CD8-positive, alpha-beta memory T cell (primary cell): ENCODE measurements at regions of chr18 and their contacts with region 1.

Region 1: GRCh38 chr18:9209279-9209678 is 72.7 kb downstream of the ANKRD12 start:
- DNase-seq: no peak
- H3K4me3 ChIP-seq: no peak overlapping the region
- H3K4me3 Mint-ChIP-seq: no peak overlapping the region
- H3K27ac ChIP-seq: no peak overlapping the region
- H3K27ac Mint-ChIP-seq: peak overlapping the region in 1 of 8 donors; percentile 59
- H3K4me1 ChIP-seq: no peaks in the 10 kb centered on the region
- H3K4me1 Mint-ChIP-seq: peaks cover 23 to 54% (median 42%) of the 10 kb centered on the region in 3 donors
- H3K27me3 ChIP-seq: no peaks in the 10 kb centered on the region
- H3K27me3 Mint-ChIP-seq: no peaks in the 10 kb centered on the region

Region 2: GRCh38 chr18:8943900-8944870 is 265.1 kb before region 1 on chr18:
- CTCF ChIA-PET with region 1: no interaction called
- POLR2A ChIA-PET with region 1: no interaction called
- DNase-seq: no peak
- H3K4me3 ChIP-seq: no peak overlapping the region
- H3K4me3 Mint-ChIP-seq: no peak overlapping the region
- H3K27ac ChIP-seq: no peak overlapping the region
- H3K27ac Mint-ChIP-seq: no peak overlapping the region
- H3K4me1 ChIP-seq: no peaks in the 10 kb centered on the region
- H3K4me1 Mint-ChIP-seq: no peaks in the 10 kb centered on the region
- H3K27me3 ChIP-seq: no peaks in the 10 kb centered on the region
- H3K27me3 Mint-ChIP-seq: peaks cover 7 to 14% of the 10 kb centered on the region in 2 donors

Region 3: DNA sequence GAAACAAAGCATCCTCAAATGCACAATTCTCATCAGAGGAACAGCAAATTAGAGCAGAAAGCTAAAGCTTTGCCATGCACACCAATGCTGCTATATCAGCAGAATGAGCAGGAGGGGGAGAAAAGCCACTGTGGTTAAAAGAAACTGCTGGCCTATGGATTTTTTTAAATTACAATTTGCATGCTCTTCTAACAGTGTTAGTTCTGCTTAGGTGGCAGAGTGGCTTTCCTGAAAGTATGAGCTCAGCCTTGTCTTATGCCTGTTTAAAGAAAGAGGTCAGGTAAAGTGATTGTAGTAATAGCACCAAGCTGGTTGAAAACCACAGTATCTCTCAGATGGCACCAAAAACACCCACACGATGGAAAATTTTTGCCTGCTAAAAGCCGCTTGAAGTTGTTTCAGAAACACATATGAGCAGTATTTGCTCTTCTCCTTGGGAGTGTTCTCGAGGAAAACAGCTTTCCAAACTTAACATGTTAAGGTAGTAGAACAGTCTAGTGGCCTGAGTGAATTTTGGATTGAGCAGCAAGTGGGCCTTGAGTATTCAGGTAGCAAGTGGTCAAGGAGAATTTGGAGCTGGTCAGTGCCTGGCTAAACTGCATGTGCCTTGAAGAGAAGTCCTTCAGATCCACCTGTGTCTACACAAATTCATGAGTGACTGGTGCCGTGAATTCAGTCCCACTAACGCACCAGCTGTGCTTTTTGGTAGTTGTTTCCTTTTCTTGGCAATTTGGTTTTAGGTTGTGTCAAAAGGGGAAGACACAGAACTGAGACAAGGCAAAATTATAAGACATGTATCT is 126.4 kb before region 1 on chr18:
- CTCF ChIA-PET with region 1: no interaction called
- POLR2A ChIA-PET with region 1: interaction called, 12 read pairs
- DNase-seq: peak in 4 of 5 donors; percentile 11 to 49 (median 26)
- H3K4me3 ChIP-seq: peak overlapping the region; percentile 5
- H3K4me3 Mint-ChIP-seq: peak overlapping the region; percentile 34 to 70 (median 65)
- H3K27ac ChIP-seq: no peak overlapping the region
- H3K27ac Mint-ChIP-seq: peak overlapping the region; percentile 78 to 97 (median 90)
- H3K4me1 ChIP-seq: peaks cover 23% of the 10 kb centered on the region
- H3K4me1 Mint-ChIP-seq: peaks cover 19 to 27% (median 21%) of the 10 kb centered on the region in 3 donors
- H3K27me3 ChIP-seq: no peaks in the 10 kb centered on the region
- H3K27me3 Mint-ChIP-seq: no peaks in the 10 kb centered on the region

Region 4: DNA sequence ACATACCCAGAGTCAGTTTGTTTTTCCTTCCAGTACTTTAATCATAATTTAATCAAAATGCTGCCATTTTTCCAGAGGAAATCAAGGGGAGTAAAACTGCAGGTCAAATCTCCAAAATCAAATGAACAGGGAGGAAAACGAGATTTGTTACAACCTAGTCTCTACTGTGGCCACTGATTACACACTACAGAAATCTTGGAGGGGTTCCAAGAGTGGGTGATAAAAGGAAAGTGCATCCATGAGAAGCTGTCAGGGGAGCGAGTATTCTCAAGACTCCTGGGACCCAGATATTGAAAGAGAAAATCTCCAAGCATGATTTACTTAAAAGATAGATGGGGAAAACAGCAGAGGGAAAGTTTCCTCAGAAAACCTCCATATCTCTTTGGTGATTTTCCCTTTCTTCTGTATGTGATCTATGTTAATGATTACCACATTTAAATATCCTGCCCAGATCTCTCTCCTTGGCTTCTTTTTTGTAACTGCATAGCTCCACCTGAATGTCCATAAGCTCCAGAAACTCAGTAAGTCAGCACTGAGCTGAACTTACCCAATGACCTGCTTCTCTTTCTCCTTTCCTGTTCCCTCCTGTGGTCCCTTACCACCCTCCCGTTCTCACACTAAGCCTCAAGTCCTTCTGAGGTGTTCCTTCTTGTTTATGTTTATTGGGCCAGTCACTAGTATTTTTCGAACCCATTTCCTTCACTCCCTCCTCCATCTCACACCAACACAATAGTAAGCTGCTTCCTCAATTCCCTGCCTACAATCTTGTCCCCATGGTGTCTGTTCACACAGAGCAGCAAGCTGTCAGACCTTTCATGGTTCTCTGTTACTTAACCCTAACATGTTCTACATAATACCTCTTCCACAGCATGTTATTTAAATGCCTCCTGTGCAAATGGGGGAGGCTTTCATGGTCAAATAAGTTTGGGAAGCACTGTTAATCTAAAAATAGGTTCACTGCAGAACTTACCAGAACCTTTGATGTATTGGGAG is 51.4 kb after region 1 on chr18:
- CTCF ChIA-PET with region 1: no interaction called
- POLR2A ChIA-PET with region 1: no interaction called
- DNase-seq: no peak
- H3K4me3 ChIP-seq: no peak overlapping the region
- H3K4me3 Mint-ChIP-seq: no peak overlapping the region
- H3K27ac ChIP-seq: no peak overlapping the region
- H3K27ac Mint-ChIP-seq: peak overlapping the region in 5 of 8 donors; percentile 5 to 66 (median 32)
- H3K4me1 ChIP-seq: no peaks in the 10 kb centered on the region
- H3K4me1 Mint-ChIP-seq: peaks cover 6 to 18% (median 13%) of the 10 kb centered on the region in 3 donors
- H3K27me3 ChIP-seq: no peaks in the 10 kb centered on the region
- H3K27me3 Mint-ChIP-seq: no peaks in the 10 kb centered on the region